ENCODE measurements at regions of chr14 and their contacts with region 1.

Region 1: DNA sequence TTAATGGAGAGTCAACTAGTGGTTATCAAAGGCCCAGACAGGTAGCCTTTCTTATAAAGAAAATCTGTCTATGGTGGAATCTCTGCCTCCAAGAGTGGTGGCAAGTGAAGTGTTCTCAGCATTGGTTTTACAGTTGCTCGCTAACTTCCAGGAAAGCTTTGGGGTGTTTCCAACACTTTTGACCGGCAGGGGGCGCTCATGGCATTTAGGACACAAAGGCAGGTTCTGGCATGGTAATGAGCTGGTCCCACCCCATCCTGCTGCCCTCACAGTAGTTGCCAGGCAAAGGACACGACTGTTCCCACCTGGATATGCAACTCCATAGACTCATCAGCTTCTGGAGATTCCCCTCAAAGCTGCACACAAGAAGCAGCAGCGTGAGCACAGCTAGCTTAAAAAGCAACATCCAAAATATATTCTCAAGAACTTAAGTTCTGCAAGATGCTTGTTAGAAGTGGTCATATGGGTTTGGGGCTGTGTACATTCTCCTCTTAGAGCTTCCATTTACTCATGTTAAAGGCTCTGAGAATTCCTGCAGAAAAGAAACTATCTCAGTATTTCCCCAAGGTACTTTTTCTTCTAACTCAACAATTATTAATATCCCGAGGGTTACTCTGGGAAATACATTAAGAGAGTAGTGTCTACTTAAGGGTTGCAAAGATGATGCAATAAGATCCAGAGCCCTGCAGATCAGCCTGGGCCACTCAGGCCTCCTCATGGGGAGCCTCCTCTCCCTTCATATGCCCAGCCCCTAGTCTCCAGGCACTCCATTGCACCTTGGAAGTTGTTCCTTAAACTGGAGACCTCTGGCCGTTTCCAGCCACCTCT is 14.8 kb downstream of the PROX2 start:
- H3K4me3 ChIP-seq: no peak overlapping the region
- H3K27ac ChIP-seq: no peak overlapping the region
- H3K4me1 ChIP-seq: no peaks in the 10 kb centered on the region
- CTCF ChIP-seq: peak; percentile 70; the same call in 1 of the 2 replicates

Region 2: DNA sequence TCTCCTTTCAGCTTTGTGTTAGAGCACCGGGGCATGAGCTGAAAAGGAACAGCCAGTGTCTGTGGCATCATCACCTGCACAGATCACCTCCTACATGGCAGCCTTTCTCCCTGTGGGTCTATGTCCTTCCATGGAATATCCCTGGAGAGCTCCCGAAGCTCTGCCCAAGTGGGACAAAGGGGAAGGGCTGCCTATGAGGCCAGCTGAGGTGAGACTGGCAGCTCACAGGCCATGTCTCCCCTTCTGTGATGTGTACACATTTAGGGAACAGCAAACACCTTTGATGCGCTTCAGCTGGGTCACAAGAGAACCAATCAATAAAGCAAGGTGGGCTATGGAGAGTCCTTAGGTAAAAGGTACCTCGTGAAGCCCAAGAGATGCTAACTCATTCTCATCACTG is 10.7 kb after region 1 on chr14:
- CTCF ChIA-PET with region 1: interaction called, 49 read pairs
- POLR2A ChIA-PET with region 1: no interaction called
- H3K4me3 ChIP-seq: no peak overlapping the region
- H3K27ac ChIP-seq: no peak overlapping the region
- H3K4me1 ChIP-seq: no peaks in the 10 kb centered on the region
- CTCF ChIP-seq: no peak

Region 3: GRCh38 chr14:74893614-74894091 is 32.5 kb after region 1 on chr14:
- CTCF ChIA-PET with region 1: interaction called, 22 read pairs
- POLR2A ChIA-PET with region 1: no interaction called
- H3K4me3 ChIP-seq: no peak overlapping the region
- H3K27ac ChIP-seq: no peak overlapping the region
- H3K4me1 ChIP-seq: peaks cover 3% of the 10 kb centered on the region
- CTCF ChIP-seq: no peak

Region 4: DNA sequence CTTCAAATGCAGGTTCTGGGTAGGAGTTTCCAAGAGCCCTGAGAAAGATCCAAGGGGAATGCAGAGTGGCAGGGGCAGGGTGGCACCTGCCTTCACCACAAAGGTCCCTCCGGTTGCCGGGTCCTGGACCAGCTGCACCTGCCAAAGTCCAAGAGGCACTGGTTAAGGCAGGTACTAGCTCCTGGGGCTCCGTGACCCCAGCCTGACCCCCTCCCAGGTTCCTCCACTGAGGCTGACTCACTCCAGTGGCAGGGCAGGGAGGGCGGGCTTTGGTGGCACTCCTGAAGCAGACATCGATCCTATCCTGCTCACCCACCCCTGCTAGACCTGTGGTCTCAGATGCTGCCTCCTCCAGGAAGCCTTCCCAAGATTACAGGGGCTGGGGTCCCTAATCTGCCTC is 50.6 kb after region 1 on chr14:
- CTCF ChIA-PET with region 1: interaction called, 195 read pairs
- POLR2A ChIA-PET with region 1: interaction called, 9 read pairs
- H3K4me3 ChIP-seq: no peak overlapping the region
- H3K27ac ChIP-seq: no peak overlapping the region
- H3K4me1 ChIP-seq: no peaks in the 10 kb centered on the region
- CTCF ChIP-seq: no peak

Region 5: DNA sequence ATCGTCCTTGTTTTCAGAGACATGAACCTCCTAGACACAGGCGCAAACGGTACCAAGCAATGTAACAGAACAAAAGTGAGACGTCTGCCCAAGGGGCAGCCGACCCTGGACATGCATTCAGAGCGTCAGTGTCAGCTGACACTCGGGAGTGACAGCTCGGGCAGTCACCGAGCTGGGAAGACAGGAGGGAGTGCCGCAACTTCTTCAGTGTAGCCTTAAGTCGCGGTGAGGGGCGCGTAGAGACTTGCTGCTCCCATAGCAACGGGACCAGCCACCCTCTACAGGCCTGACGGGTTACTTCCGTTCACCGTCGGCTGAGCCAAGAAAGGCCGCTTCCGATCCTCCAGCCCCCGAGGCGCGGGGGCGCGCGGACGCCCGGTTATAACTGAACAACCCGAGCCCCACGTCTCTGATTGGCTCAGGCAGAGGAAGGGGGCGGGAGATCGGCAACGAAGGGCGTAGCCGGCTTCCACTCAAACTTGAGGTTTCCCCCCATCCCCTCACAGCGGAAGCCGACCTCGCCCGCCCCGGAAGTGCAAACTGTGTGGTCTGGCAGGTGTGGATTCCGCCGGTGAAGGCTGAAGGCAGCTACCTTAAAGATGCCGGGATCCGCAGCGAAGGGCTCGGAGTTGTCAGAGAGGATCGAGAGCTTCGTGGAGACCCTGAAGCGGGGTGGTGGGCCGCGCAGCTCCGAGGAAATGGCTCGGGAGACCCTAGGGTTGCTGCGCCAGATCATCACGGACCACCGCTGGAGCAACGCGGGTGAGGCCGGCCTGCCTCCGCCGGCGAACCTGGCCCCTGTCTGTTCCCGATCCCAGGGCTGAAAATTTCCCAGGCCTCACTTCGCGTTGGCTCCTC is 141.5 kb after region 1 on chr14 and contains the start of gene EIF2B2:
- CTCF ChIA-PET with region 1: no interaction called
- POLR2A ChIA-PET with region 1: no interaction called
- H3K4me3 ChIP-seq: peak within 1 kb of the TSS; percentile 83
- H3K27ac ChIP-seq: peak within 1 kb of the TSS; percentile 55
- H3K4me1 ChIP-seq: no peaks in the 10 kb centered on the region
- CTCF ChIP-seq: peak; percentile 36; the same call in 1 of the 2 replicates

Region 6: DNA sequence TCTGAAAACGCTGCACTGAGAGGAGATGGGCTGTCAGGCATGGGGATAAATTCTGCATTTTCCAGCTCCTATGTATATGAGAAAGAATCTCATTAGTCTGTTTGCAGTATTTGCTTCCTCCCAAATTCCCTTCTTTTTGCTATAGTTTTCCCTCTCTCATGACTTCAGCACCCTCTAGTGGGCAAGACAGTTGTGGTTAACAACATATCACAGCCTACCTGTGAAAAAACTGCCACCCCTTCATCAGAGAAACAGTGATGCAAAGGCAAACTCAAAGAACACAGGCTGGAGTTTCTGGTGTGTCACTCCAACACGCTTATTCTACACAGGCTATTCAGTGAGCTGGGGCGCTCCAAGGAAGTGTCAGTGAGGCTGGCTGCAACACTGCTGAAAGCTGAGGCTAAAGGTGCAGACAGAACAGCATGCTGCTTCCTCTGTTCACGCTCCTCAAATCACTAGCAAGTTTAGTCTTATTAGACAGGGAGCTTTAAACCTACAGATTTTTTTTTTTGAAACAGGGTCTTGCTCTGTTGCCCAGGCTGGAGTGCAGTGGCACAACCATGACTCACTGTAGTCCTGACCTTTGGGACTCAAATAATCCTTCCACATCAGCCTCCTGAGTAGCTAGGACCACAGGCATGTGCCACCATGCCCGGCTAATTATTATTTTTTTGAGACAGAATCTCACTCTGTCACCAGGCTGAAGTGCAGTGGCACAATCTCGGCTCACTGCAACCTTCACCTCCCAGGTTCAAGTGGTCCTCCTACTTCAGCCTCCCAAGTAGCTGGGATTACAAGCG is 227.7 kb after region 1 on chr14:
- CTCF ChIA-PET with region 1: interaction called, 86 read pairs
- POLR2A ChIA-PET with region 1: no interaction called
- H3K4me3 ChIP-seq: no peak overlapping the region
- H3K27ac ChIP-seq: no peak overlapping the region
- H3K4me1 ChIP-seq: no peaks in the 10 kb centered on the region
- CTCF ChIP-seq: peak; percentile 38; the same call in 1 of the 2 replicates

Measured in HEK293 (cell line).